GM12878 (cell line): ENCODE measurements at regions of chr2 and their contacts with region 1.

Region 1: DNA sequence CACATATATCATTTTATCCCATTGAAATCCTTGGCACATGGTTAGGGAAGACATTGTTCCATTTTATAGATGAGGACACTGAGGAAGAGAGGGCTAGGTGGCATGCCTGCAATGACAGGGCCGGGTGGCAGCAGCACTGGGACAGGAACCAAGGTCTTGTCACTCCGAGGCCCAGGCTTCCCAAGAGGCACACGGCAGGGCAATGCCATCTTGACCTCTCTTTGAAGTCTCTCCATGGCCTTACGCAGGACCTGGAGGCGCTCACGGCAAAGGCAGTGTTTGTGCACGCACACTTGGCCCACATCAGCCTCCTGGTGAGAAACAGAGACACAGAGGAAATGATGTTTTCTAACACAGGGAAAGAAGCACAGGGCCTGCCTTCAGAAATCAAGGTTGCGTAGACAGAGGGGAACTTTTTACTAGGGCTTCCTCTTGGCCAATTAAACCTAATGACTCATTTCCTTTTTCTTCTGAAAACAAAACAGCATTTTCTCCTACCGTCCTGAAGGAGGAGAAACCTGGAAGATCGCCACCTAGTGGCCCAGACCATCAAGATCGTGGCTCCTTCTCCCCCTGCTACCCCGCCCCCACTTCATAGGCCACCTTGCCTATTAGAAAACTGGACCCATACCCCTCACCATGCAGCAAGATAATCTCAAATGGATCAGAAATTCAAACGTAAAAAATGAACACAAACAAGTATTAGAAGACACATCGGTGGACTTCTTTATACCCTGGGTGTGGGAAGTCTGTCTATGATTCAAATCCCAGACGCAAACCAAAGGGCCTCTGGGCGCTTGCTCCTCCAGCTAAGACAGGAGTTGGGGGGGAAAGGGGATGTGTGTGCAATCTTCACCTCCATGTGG is 74.6 kb upstream of the SP3 start:
- DNase-seq: peak; percentile 84
- ATAC-seq: peak; percentile 93
- H3K4me3 ChIP-seq: no peak overlapping the region
- H3K27ac ChIP-seq: peak overlapping the region; percentile 62
- H3K4me1 ChIP-seq: peaks cover 42% of the 10 kb centered on the region
- H3K27me3 ChIP-seq: no peaks in the 10 kb centered on the region
- CTCF ChIP-seq: peak; percentile 82 to 88 (median 85)
- EP300 ChIP-seq: peak in 1 of 2 experiments; percentile 48; a peak in 1 of 4 replicates
- POLR2A ChIP-seq: no peak
- RAD21 ChIP-seq: peak; percentile 79

Region 2: GRCh38 chr2:173752152-173752551 is 287.6 kb before region 1 on chr2:
- CTCF ChIA-PET with region 1: no interaction called
- POLR2A ChIA-PET with region 1: no interaction called
- RAD21 ChIA-PET with region 1: no interaction called
- SMC1A ChIA-PET with region 1: no interaction called
- in situ Hi-C with region 1: no loop called
- intact Hi-C with region 1: loop called (anchors 10 kb)
- DNase-seq: no peak
- ATAC-seq: peak; percentile 61
- H3K4me3 ChIP-seq: no peak overlapping the region
- H3K27ac ChIP-seq: no peak overlapping the region
- H3K4me1 ChIP-seq: no peaks in the 10 kb centered on the region
- H3K27me3 ChIP-seq: no peaks in the 10 kb centered on the region; a peak in 1 of 4 replicates
- CTCF ChIP-seq: peak; percentile 29 to 31 (median 30); a peak in 2 of 6 replicates
- EP300 ChIP-seq: no peak
- POLR2A ChIP-seq: no peak
- RAD21 ChIP-seq: peak; percentile 37; the same call in 1 of the 2 replicates

Region 3: DNA sequence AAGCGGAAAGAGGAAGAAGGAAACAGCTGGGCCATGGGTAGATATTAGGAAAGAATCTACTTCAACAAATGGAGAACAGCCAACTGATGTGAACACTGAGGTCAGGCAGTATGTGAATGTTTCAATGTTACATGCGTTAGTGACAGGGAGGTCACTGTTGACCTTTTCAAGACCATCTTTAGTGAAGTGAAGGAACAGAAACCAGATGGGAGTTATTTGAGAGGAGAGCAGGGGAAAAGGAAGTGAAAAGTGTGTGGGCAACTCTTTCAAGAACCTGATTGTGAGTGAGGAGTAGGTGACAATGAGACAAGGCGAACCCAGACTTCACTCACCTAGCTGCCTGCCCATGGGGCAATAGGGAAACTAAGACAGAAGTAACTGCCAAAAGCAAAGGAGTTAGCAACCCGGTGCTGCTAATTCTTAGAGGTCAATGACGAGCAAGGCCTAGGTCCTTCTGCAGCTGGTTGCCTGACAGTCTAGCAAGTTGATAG is 141.6 kb before region 1 on chr2:
- CTCF ChIA-PET with region 1: no interaction called
- POLR2A ChIA-PET with region 1: no interaction called
- RAD21 ChIA-PET with region 1: no interaction called
- SMC1A ChIA-PET with region 1: no interaction called
- in situ Hi-C with region 1: no loop called
- intact Hi-C with region 1: loop called (anchors 5 kb)
- DNase-seq: peak; percentile 94
- ATAC-seq: peak; percentile 94
- H3K4me3 ChIP-seq: peak overlapping the region; percentile 17; the same call in 1 of the 2 replicates
- H3K27ac ChIP-seq: peak overlapping the region; percentile 78
- H3K4me1 ChIP-seq: peaks cover 40% of the 10 kb centered on the region
- H3K27me3 ChIP-seq: no peaks in the 10 kb centered on the region
- CTCF ChIP-seq: no peak
- EP300 ChIP-seq: peak; percentile 57 to 94; a peak in 3 of 4 replicates
- POLR2A ChIP-seq: no peak
- RAD21 ChIP-seq: no peak